ENCODE measurements at regions of chr9 and their contacts with region 1.

Region 1: GRCh38 chr9:21317956-21318923 is 13.1 kb upstream of the IFNA5 start:
- DNase-seq: peak; percentile 22
- ATAC-seq: peak; percentile 76
- H3K4me3 Mint-ChIP-seq: no peak overlapping the region
- H3K27ac Mint-ChIP-seq: no peak overlapping the region
- H3K4me1 Mint-ChIP-seq: peaks cover 4% of the 10 kb centered on the region
- H3K27me3 Mint-ChIP-seq: peaks cover 12% of the 10 kb centered on the region
- CTCF ChIP-seq: peak; percentile 48

Region 2: DNA sequence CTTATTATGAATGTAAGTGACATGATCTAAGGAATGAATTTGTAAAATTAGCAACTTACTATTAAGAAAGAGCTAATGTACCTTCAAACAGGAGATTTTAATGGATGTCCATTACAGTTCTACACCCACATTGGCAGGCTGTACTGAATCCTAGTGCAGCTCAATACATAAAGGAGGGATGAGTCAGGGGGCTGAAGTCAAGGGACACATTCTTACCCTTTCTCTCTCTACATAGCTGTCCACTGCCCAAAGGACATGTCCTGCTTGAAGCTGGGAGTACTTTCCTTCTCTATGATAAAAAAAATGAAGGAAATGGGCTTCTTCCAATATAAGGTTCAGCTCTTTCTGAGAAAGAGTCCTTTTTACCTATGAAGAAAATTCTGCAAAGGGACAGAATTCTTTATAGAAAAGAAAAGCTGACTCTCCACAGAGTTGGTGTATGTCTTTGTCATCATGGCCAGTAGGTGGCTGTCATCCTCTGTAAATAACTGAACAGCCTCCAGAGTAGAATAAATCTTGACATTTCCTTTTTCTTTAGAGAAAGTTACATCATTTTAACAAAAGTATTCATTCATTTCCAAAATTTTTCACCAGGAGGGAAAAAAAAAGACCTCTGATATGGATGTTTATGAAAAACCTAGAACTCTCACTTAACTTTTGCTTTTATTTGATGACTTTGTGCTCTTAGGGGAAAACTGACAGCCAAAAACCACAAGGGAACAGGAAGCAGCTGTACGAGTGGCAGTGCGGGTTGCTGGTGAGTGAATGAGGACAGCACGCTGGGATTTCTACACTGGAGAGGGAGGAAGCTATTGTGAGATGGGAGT is 65.3 kb before region 1 on chr9:
- CTCF ChIA-PET with region 1: interaction called, 21 read pairs
- POLR2A ChIA-PET with region 1: no interaction called
- DNase-seq: peak; percentile 21
- ATAC-seq: peak; percentile 79
- H3K4me3 Mint-ChIP-seq: no peak overlapping the region
- H3K27ac Mint-ChIP-seq: no peak overlapping the region
- H3K4me1 Mint-ChIP-seq: peaks cover 17% of the 10 kb centered on the region
- H3K27me3 Mint-ChIP-seq: peaks cover 34% of the 10 kb centered on the region
- CTCF ChIP-seq: peak; percentile 35

Region 3: GRCh38 chr9:21334701-21335632 is 16.7 kb after region 1 on chr9 and contains the start of gene KLHL9:
- CTCF ChIA-PET with region 1: interaction called, 16 read pairs
- POLR2A ChIA-PET with region 1: no interaction called
- DNase-seq: peak; percentile 91
- ATAC-seq: peak; percentile 94
- H3K4me3 Mint-ChIP-seq: peak within 1 kb of the TSS; percentile 93
- H3K27ac Mint-ChIP-seq: peak within 1 kb of the TSS; percentile 88
- H3K4me1 Mint-ChIP-seq: peaks cover 37% of the 10 kb centered on the region
- H3K27me3 Mint-ChIP-seq: peaks cover 18% of the 10 kb centered on the region
- CTCF ChIP-seq: no peak
- total RNA-seq, gene KLHL9: 15.6 to 17.4 TPM (median 16.1 TPM) in 3 replicates

Region 4: GRCh38 chr9:21402386-21403251 is 84.4 kb after region 1 on chr9:
- CTCF ChIA-PET with region 1: interaction called, 12 read pairs
- POLR2A ChIA-PET with region 1: no interaction called
- DNase-seq: peak; percentile 71
- ATAC-seq: peak; percentile 96
- H3K4me3 Mint-ChIP-seq: peak overlapping the region; percentile 81
- H3K27ac Mint-ChIP-seq: no peak overlapping the region
- H3K4me1 Mint-ChIP-seq: peaks cover 5% of the 10 kb centered on the region
- H3K27me3 Mint-ChIP-seq: peaks cover 43% of the 10 kb centered on the region
- CTCF ChIP-seq: no peak

Region 5: DNA sequence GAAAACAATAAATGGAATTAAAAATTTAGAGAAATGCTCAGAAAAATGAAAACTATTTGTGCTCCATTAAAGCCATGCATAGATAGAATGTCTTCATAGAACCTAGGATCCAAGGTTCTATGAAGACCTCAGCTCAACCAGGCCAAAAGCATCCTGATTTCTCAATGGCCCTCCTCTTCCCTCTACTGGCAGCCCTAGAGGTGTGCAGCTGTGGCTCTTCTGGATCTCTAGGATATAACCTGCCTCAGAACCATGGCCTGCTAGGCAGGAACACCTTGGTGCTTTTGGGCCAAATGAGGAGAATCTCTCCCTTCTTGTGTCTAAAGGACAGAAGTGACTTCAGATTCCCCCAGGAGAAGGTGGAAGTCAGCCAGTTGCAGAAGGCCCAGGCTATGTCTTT is 137.1 kb after region 1 on chr9:
- CTCF ChIA-PET with region 1: interaction called, 29 read pairs
- POLR2A ChIA-PET with region 1: no interaction called
- DNase-seq: peak; percentile 25
- ATAC-seq: peak; percentile 97
- H3K4me3 Mint-ChIP-seq: no peak overlapping the region
- H3K27ac Mint-ChIP-seq: no peak overlapping the region
- H3K4me1 Mint-ChIP-seq: peaks cover 12% of the 10 kb centered on the region
- H3K27me3 Mint-ChIP-seq: peaks cover 5% of the 10 kb centered on the region
- CTCF ChIP-seq: 0 out of 2 replicates have a peak, but pooled peaks have one; percentile 31